Heart right ventricle (tissue), 16 donors: ENCODE measurements at regions of chr16 and their contacts with region 1.

Region 1: GRCh38 chr16:63289852-63290460 is 1253.7 kb upstream of the CDH8 start:
- DNase-seq: peak in 1 of 2 donors; percentile 22
- ATAC-seq: peak in 6 of 8 donors; percentile 67 to 90 (median 88)
- H3K4me3 ChIP-seq: no peak overlapping the region
- H3K27ac ChIP-seq: no peak overlapping the region
- H3K4me1 ChIP-seq: peaks cover 0 to 21% (median 0%) of the 10 kb centered on the region in 9 donors
- H3K27me3 ChIP-seq: no peaks in the 10 kb centered on the region
- CTCF ChIP-seq: peak; percentile 38 to 77 (median 69)

Region 2: GRCh38 chr16:62225697-62226280 is 1064.2 kb before region 1 on chr16:
- intact Hi-C with region 1: loop called in 1 of 10 experiments (anchors 10 kb)
- DNase-seq: peak; percentile 47 to 62
- ATAC-seq: peak in 7 of 8 donors; percentile 25 to 90 (median 66)
- H3K4me3 ChIP-seq: peak overlapping the region in 2 of 10 donors; percentile 16 to 24
- H3K27ac ChIP-seq: no peak overlapping the region
- H3K4me1 ChIP-seq: no peaks in the 10 kb centered on the region
- H3K27me3 ChIP-seq: no peaks in the 10 kb centered on the region
- CTCF ChIP-seq: peak in 7 of 9 donors; percentile 38 to 53 (median 46)

Region 3: DNA sequence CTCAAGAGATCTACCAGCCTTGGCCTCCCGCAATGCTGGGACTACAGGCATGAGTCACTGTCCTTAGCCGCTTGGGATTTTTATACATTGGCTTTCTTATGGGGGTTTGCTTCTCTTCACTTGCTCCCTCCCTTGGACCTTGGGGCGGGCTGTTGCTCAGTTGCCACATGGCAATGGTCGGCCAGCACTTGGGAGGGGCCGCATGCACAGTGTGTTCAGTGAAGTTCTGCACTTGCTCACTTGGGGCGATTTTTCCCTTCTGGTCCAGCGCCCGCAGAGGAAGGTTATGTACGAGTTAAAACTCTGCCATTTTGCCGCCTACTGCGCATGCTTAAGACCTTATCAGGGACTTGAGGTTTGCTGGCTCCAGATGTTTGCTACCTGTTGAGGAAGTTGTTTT is 113.8 kb after region 1 on chr16:
- intact Hi-C with region 1: no loop called
- DNase-seq: no peak
- ATAC-seq: no peak
- H3K4me3 ChIP-seq: no peak overlapping the region
- H3K27ac ChIP-seq: no peak overlapping the region
- H3K4me1 ChIP-seq: peaks cover 0 to 10% (median 0%) of the 10 kb centered on the region in 9 donors
- H3K27me3 ChIP-seq: no peaks in the 10 kb centered on the region
- CTCF ChIP-seq: no peak